Activated CD4-positive, alpha-beta T cell treated with anti-CD3 and anti-CD28 coated beads for 36 hours (primary cell): ENCODE measurements at regions of chr1 and their contacts with region 1.

Region 1: DNA sequence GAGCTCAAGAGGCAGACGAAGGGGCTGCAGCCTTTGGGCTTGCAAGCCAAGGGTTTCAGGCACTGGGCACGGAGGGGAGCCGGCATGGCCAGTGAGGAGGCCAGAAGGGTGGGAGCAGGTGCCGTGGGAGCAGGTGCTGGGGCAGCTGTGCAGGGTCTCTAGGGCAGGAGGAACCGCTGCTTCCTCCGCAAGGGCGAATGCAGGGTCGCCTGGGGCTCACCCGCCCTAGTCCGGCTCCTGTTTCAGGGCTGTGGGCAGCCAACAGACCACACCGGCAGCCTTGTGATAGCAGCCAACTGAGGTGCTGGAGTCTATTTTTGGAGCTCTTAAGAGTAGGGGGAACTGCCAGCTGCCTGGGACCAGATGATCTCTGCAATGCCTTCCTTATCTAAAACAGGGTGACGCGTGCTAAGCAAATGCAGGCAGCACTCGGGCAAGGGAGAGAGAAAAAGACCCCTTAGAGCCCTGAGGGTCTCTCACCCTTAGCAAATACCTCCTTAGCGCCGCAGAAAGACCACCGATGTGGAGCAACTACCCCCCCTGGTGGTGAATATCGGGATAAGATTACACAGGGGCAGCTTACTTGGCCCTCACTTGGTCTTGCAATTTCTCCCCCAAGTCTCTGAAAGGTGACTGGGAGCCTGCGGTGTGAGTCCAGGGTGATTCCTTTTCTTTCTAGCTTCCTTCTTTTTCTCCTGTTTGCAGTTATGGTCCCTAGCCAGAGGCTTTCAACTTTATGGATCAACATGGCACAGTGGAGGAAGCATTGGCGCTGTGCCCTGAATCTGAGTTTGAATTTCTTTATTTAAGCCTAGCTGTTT is 20.7 kb upstream of the MAPKAPK2 start:
- DNase-seq: peak; percentile 83
- ATAC-seq: peak; percentile 70
- H3K4me3 Mint-ChIP-seq: no peak overlapping the region
- H3K27ac Mint-ChIP-seq: no peak overlapping the region
- H3K4me1 Mint-ChIP-seq: peaks cover 28% of the 10 kb centered on the region
- H3K27me3 Mint-ChIP-seq: peaks cover 23% of the 10 kb centered on the region

Region 2: GRCh38 chr1:206442101-206442500 is 221.9 kb before region 1 on chr1:
- CTCF ChIA-PET with region 1: no interaction called
- POLR2A ChIA-PET with region 1: no interaction called
- intact Hi-C with region 1: no loop called
- DNase-seq: peak; percentile 44
- ATAC-seq: peak; percentile 87
- H3K4me3 Mint-ChIP-seq: no peak overlapping the region
- H3K27ac Mint-ChIP-seq: no peak overlapping the region
- H3K4me1 Mint-ChIP-seq: peaks cover 3% of the 10 kb centered on the region
- H3K27me3 Mint-ChIP-seq: no peaks in the 10 kb centered on the region

Region 3: DNA sequence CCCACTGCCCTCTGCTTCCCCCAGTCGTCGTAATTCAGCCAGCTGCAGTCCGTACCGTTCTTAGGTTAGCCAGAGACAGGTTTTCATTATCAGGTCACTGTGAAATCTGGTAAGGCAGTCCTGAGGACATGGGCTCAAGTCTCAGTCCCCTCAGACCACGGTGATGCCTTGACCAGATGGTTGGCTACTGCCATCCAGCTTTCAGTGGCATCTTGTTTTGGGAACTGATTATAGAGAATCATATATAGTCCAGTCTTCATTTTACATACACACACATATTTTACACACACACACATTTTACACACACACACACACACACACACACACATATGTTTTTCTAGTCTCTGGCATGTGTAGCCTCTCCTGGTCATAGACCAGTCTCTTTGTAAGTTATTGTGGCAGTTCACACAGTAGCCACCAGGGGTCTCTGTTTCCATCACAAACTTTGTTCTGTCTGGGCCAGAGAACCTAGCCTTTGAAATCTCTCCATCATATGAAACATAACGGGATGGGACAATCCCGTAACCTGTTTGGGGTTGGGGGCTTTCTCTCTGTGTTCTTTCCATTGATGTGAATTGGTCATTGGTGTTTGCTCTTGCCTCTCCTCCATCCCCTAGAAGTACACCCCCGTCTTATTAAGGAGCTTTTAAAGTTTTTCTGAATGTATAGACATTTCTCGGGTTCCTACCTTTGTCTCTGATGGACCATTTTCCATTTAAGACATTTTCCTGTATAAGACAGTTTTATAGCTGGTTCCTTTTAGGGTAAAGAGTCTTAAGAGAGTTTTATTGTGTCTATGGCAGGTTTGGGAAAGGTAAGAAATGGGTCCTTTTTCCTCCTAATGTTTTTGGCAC is 202.2 kb before region 1 on chr1:
- CTCF ChIA-PET with region 1: interaction called, 25 read pairs
- POLR2A ChIA-PET with region 1: no interaction called
- intact Hi-C with region 1: no loop called
- DNase-seq: peak; percentile 85
- ATAC-seq: peak; percentile 57
- H3K4me3 Mint-ChIP-seq: no peak overlapping the region
- H3K27ac Mint-ChIP-seq: peak overlapping the region; percentile 39
- H3K4me1 Mint-ChIP-seq: peaks cover 49% of the 10 kb centered on the region
- H3K27me3 Mint-ChIP-seq: no peaks in the 10 kb centered on the region

Region 4: DNA sequence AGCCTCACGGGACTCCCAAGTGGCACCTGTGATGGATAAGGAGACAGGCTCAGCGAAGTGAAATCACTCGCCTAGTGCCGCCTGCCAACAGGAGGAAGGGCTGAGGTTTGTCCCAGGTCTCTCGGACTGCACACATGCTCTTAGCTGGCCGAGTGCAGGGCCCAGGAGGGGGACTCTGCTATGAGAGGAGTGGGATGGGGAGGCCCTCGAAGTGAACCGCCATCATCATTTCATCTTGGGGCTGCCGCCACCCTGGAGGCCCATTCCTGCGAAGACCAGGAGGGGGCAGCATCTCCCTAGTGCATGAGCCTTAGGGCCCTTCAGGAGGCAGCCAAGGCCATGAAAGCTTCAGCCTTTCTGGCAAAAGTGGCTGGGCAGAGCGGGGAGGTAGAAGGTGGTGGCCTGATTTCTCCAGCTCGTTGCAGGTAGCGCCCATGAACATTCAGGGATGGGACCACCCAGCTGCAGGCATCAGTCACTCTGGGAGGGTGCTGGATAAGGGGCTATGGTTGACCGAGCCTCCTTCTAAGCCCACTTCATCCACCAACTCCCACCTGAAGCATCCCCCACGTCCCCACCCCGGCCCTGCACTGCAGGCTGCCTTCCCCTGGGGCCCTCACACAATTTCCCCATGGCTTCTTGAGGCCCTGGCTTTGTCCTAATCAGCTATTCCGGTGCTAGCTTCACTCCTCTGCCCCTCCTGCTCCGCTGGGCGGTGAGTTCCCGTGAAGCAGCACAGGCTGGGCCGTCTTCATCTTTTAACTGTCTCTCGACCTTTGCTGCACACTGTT is 173.9 kb before region 1 on chr1:
- CTCF ChIA-PET with region 1: interaction called, 70 read pairs
- POLR2A ChIA-PET with region 1: no interaction called
- intact Hi-C with region 1: loop called (anchors 1 to 2 kb)
- DNase-seq: peak; percentile 89
- ATAC-seq: peak; percentile 95
- H3K4me3 Mint-ChIP-seq: no peak overlapping the region
- H3K27ac Mint-ChIP-seq: no peak overlapping the region
- H3K4me1 Mint-ChIP-seq: no peaks in the 10 kb centered on the region
- H3K27me3 Mint-ChIP-seq: no peaks in the 10 kb centered on the region

Region 5: GRCh38 chr1:206590025-206590758 is 73.8 kb before region 1 on chr1:
- CTCF ChIA-PET with region 1: interaction called, 21 read pairs
- POLR2A ChIA-PET with region 1: no interaction called
- intact Hi-C with region 1: loop called (anchors 1 kb)
- DNase-seq: peak; percentile 81
- ATAC-seq: peak; percentile 94
- H3K4me3 Mint-ChIP-seq: peak overlapping the region; percentile 59
- H3K27ac Mint-ChIP-seq: peak overlapping the region; percentile 98
- H3K4me1 Mint-ChIP-seq: peaks cover 65% of the 10 kb centered on the region
- H3K27me3 Mint-ChIP-seq: no peaks in the 10 kb centered on the region

Region 6: GRCh38 chr1:206651958-206652890 is 11.8 kb before region 1 on chr1:
- CTCF ChIA-PET with region 1: interaction called, 176 read pairs
- POLR2A ChIA-PET with region 1: no interaction called
- intact Hi-C with region 1: no loop called
- DNase-seq: no peak
- ATAC-seq: peak; percentile 33
- H3K4me3 Mint-ChIP-seq: no peak overlapping the region
- H3K27ac Mint-ChIP-seq: no peak overlapping the region
- H3K4me1 Mint-ChIP-seq: peaks cover 3% of the 10 kb centered on the region
- H3K27me3 Mint-ChIP-seq: peaks cover 3% of the 10 kb centered on the region

Region 7: DNA sequence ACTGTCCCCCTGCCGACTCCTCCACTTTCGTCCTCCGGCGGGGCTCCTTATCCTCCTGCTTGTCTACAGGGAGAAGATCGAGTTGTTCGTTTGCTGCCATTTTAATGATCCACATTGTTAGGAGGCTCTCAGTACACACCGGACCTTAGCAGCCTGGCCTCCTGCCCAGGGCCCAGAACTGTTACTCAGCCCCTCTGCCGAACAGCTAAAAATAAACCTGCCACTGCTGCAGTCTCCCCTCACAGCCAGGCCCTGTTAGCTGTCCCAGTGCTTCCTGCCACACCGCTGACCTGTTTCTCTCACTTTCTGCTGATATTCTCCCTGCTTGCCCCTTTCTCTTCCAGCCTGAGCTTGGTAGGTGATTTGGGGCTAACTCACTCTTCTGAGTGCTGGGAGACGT is 29.0 kb after region 1 on chr1:
- CTCF ChIA-PET with region 1: interaction called, 29 read pairs
- POLR2A ChIA-PET with region 1: interaction called, 3 read pairs
- intact Hi-C with region 1: no loop called
- DNase-seq: no peak
- ATAC-seq: no peak
- H3K4me3 Mint-ChIP-seq: no peak overlapping the region
- H3K27ac Mint-ChIP-seq: peak overlapping the region; percentile 32
- H3K4me1 Mint-ChIP-seq: peaks cover 64% of the 10 kb centered on the region
- H3K27me3 Mint-ChIP-seq: no peaks in the 10 kb centered on the region

Region 8: GRCh38 chr1:206816390-206817287 is 152.6 kb after region 1 on chr1:
- CTCF ChIA-PET with region 1: no interaction called
- POLR2A ChIA-PET with region 1: no interaction called
- intact Hi-C with region 1: no loop called
- DNase-seq: peak; percentile 38
- ATAC-seq: peak; percentile 96
- H3K4me3 Mint-ChIP-seq: peak overlapping the region; percentile 10
- H3K27ac Mint-ChIP-seq: peak overlapping the region; percentile 83
- H3K4me1 Mint-ChIP-seq: peaks cover 26% of the 10 kb centered on the region
- H3K27me3 Mint-ChIP-seq: peaks cover 2% of the 10 kb centered on the region

Region 9: DNA sequence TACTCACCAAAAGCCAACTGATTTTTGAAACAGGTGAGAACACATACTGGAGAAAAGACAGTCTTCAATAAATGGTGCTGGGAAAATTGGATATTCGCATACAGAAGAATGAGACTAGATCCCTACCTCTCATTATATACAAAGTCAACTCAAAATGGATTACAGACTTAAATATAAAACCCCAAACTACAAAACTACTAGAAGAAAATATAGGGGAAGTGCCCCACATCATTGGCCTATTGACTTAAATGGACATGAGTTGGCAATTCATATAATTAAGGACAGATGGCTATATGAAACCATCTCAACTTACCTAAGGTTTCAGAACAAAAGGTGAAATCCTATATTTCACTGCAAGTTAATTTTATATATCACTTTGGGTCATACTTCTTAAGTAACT is 500.0 kb after region 1 on chr1:
- CTCF ChIA-PET with region 1: no interaction called
- POLR2A ChIA-PET with region 1: no interaction called
- intact Hi-C with region 1: no loop called
- DNase-seq: no peak
- ATAC-seq: no peak
- H3K4me3 Mint-ChIP-seq: no peak overlapping the region
- H3K27ac Mint-ChIP-seq: no peak overlapping the region
- H3K4me1 Mint-ChIP-seq: no peaks in the 10 kb centered on the region
- H3K27me3 Mint-ChIP-seq: no peaks in the 10 kb centered on the region